ENCODE measurements at regions of chr14 and their contacts with region 1.

Region 1: GRCh38 chr14:57526942-57527341 is 33.3 kb upstream of the CCDC198 start:
- DNase-seq: peak; percentile 70
- ATAC-seq: peak; percentile 95
- H3K4me3 Mint-ChIP-seq: no peak overlapping the region
- H3K27ac Mint-ChIP-seq: no peak overlapping the region
- H3K4me1 Mint-ChIP-seq: no peaks in the 10 kb centered on the region
- H3K27me3 Mint-ChIP-seq: no peaks in the 10 kb centered on the region; the same call in 1 of the 2 replicates
- CTCF ChIP-seq: 0 out of 2 replicates have a peak, but pooled peaks have one; percentile 14

Region 2: GRCh38 chr14:57352396-57353170 is 174.4 kb before region 1 on chr14:
- CTCF ChIA-PET with region 1: no interaction called
- POLR2A ChIA-PET with region 1: no interaction called
- DNase-seq: no peak
- ATAC-seq: peak; percentile 26; the same call in 1 of the 2 replicates
- H3K4me3 Mint-ChIP-seq: no peak overlapping the region
- H3K27ac Mint-ChIP-seq: no peak overlapping the region
- H3K4me1 Mint-ChIP-seq: peaks cover 3% of the 10 kb centered on the region; the same call in 1 of the 2 replicates
- H3K27me3 Mint-ChIP-seq: peaks cover 3% of the 10 kb centered on the region; the same call in 1 of the 2 replicates
- CTCF ChIP-seq: no peak

Region 3: GRCh38 chr14:57401501-57401900 is 125.4 kb before region 1 on chr14:
- CTCF ChIA-PET with region 1: no interaction called
- POLR2A ChIA-PET with region 1: no interaction called
- DNase-seq: no peak
- ATAC-seq: no peak
- H3K4me3 Mint-ChIP-seq: no peak overlapping the region
- H3K27ac Mint-ChIP-seq: no peak overlapping the region
- H3K4me1 Mint-ChIP-seq: no peaks in the 10 kb centered on the region
- H3K27me3 Mint-ChIP-seq: no peaks in the 10 kb centered on the region
- CTCF ChIP-seq: no peak

Region 4: GRCh38 chr14:57486767-57487379 is 40.1 kb before region 1 on chr14:
- CTCF ChIA-PET with region 1: interaction called, 14 read pairs
- POLR2A ChIA-PET with region 1: no interaction called
- DNase-seq: no peak
- ATAC-seq: peak; percentile 60; the same call in 1 of the 2 replicates
- H3K4me3 Mint-ChIP-seq: no peak overlapping the region
- H3K27ac Mint-ChIP-seq: no peak overlapping the region
- H3K4me1 Mint-ChIP-seq: no peaks in the 10 kb centered on the region
- H3K27me3 Mint-ChIP-seq: no peaks in the 10 kb centered on the region
- CTCF ChIP-seq: no peak

Region 5: GRCh38 chr14:57568554-57568953 is 41.6 kb after region 1 on chr14:
- CTCF ChIA-PET with region 1: no interaction called
- POLR2A ChIA-PET with region 1: no interaction called
- DNase-seq: no peak
- ATAC-seq: no peak
- H3K4me3 Mint-ChIP-seq: no peak overlapping the region
- H3K27ac Mint-ChIP-seq: no peak overlapping the region
- H3K4me1 Mint-ChIP-seq: 0 out of 2 replicates have a peak, but pooled peaks cover 3% of the 10 kb centered on the region
- H3K27me3 Mint-ChIP-seq: no peaks in the 10 kb centered on the region
- CTCF ChIP-seq: no peak

Region 6: GRCh38 chr14:57974896-57975295 is 448.0 kb after region 1 on chr14:
- CTCF ChIA-PET with region 1: interaction called, 10 read pairs
- POLR2A ChIA-PET with region 1: no interaction called
- DNase-seq: no peak
- ATAC-seq: peak; percentile 56
- H3K4me3 Mint-ChIP-seq: no peak overlapping the region
- H3K27ac Mint-ChIP-seq: no peak overlapping the region
- H3K4me1 Mint-ChIP-seq: peaks cover 17% of the 10 kb centered on the region
- H3K27me3 Mint-ChIP-seq: no peaks in the 10 kb centered on the region
- CTCF ChIP-seq: no peak